ENCODE measurements at regions of chr11 and their contacts with region 1.

Region 1: GRCh38 chr11:101860696-101861427 is 53.9 kb upstream of the CEP126 start:
- DNase-seq: peak; percentile 70

Region 2: GRCh38 chr11:101825531-101825930 is 35.3 kb before region 1 on chr11:
- CTCF ChIA-PET with region 1: no interaction called
- POLR2A ChIA-PET with region 1: no interaction called
- DNase-seq: no peak

Region 3: GRCh38 chr11:102007567-102008437 is 146.9 kb after region 1 on chr11:
- CTCF ChIA-PET with region 1: interaction called, 54 read pairs
- POLR2A ChIA-PET with region 1: no interaction called
- DNase-seq: peak; percentile 19